Cardiac septum (tissue), 1 donor: ENCODE measurements at regions of chr10 and their contacts with region 1.

Region 1: DNA sequence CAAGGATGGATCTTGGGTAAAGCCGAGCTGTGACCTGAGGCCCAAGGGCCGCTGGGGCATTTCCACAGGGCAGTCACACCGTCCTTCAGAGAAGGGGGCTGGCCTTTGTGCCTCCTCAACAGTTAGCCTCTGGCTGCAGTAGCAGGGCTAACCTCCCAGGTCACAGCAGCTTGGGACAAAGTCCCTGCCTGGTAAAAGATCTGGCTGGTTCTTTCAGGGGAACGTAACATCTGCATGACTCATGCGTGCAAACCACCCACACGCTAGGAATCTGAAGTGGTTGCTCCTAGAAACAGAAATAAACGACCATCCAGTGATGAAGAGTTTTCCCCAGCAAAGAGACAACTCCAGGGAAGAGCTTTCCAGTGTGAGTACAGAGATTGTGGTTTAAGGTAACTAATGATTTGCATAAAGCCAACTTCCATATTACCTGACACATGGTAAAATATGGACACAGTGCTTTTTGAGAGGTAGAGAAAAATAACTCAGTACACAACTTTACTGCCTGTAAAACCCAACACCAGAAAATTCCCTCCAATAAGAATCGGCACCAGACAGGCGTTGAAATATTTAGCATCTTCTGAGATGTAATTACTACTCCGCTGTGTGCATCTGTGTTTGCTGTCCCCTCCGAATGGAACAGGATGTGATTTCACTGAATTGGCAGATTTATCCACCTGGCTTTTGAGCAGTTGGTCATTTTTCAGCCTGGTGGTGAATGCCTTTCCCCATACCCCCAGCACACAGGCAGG is 84.9 kb upstream of the ADRB1 start:
- DNase-seq: no peak

Region 2: DNA sequence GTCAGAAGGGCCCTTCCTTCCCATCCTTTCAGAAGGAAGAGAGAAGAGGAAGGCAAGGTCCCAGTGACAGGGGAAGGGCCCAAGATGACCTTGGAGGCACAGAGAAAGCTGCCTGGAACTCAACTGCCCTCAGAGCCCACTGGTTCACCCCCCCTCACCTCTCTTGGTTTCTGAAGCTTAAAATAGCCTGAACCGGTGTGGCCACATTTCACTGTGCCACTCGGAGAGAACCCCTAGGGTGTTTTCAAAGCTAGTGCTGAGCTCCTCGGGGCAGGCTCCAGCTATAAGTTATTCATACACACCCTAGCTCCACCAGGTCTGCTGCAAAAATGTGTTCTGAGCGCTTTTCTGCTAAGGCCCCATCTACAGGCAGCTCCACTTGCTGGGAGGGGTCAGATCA is 24.0 kb after region 1 on chr10:
- intact Hi-C with region 1: loop called (anchors 1 kb)
- DNase-seq: no peak

Region 3: DNA sequence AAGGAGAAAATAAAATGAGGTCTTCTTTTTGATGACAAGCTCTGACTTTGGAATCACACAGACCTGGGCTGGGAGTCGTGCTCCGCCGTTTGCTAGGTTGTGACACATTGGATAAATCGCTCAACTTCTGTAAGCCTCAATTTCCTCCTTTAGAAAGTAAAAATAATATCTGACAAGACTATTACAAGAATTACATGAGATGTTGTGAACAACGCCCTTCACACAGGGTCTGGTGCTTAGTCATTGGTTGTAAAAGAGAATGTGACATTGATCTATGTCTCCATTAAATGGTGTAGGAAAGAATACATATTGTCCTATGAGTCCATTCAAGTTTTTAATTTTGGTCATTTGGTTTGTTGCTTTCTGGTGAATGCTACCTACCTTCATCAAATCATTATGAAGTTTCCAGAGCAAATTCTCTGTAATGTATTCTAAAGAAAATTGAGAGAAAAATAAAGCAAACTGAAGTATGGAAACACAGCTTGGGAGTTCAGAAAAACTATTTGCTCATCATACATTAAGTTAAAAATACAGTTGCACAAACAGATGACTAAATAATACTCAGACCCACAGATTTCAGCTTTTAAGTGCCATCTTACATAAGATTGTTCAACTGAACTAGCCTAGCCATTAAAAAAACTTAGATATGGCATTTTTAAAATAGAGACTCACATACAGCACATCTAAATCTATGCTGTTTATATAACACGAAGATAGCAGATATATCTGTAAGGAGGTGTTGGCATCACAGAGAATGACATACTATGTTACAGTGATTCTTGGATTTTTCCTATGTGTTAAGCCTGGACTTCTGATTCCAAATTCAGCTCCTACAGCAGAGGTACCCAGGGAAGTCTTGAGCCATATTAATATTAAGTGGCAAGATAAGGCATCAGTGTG is 72.5 kb after region 1 on chr10:
- intact Hi-C with region 1: no loop called
- DNase-seq: no peak